MCF 10A (cell line): ENCODE measurements at regions of chr9 and their contacts with region 1.

Region 1: DNA sequence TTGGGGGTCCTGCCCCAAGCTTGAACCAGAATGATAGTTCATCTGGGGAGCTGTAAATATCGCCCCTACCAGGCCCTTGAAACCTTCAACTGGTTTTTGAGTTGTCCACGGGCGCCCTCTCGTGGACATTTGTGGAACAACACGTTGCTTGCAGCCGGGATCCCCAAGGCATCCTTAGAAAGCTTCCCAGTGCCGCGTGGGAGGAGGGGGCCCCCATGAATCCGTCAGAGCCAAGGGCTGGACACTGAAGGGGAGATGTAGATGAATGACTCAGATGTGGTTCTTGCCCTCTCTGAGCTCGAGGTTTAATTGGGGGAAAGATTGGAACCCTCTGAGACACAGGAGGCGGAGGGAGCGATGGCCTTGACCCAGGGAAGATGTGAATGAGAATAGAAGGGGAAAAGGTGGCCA is 31.8 kb upstream of the ORM1 start:
- DNase-seq: peak; percentile 76
- H3K4me3 Mint-ChIP-seq: no peak overlapping the region
- H3K27ac Mint-ChIP-seq: no peak overlapping the region
- H3K4me1 Mint-ChIP-seq: peaks cover 11% of the 10 kb centered on the region
- H3K27me3 Mint-ChIP-seq: no peaks in the 10 kb centered on the region
- CTCF ChIP-seq: peak; percentile 96

Region 2: GRCh38 chr9:114088571-114089170 is 202.4 kb before region 1 on chr9:
- CTCF ChIA-PET with region 1: interaction called, 73 read pairs
- POLR2A ChIA-PET with region 1: no interaction called
- intact Hi-C with region 1: no loop called
- DNase-seq: no peak
- H3K4me3 Mint-ChIP-seq: no peak overlapping the region
- H3K27ac Mint-ChIP-seq: no peak overlapping the region
- H3K4me1 Mint-ChIP-seq: no peaks in the 10 kb centered on the region
- H3K27me3 Mint-ChIP-seq: no peaks in the 10 kb centered on the region
- CTCF ChIP-seq: no peak

Region 3: GRCh38 chr9:114098016-114098935 is 192.8 kb before region 1 on chr9:
- CTCF ChIA-PET with region 1: interaction called, 19 read pairs
- POLR2A ChIA-PET with region 1: no interaction called
- intact Hi-C with region 1: no loop called
- DNase-seq: no peak
- H3K4me3 Mint-ChIP-seq: no peak overlapping the region
- H3K27ac Mint-ChIP-seq: no peak overlapping the region
- H3K4me1 Mint-ChIP-seq: no peaks in the 10 kb centered on the region
- H3K27me3 Mint-ChIP-seq: peaks cover 7% of the 10 kb centered on the region
- CTCF ChIP-seq: no peak

Region 4: DNA sequence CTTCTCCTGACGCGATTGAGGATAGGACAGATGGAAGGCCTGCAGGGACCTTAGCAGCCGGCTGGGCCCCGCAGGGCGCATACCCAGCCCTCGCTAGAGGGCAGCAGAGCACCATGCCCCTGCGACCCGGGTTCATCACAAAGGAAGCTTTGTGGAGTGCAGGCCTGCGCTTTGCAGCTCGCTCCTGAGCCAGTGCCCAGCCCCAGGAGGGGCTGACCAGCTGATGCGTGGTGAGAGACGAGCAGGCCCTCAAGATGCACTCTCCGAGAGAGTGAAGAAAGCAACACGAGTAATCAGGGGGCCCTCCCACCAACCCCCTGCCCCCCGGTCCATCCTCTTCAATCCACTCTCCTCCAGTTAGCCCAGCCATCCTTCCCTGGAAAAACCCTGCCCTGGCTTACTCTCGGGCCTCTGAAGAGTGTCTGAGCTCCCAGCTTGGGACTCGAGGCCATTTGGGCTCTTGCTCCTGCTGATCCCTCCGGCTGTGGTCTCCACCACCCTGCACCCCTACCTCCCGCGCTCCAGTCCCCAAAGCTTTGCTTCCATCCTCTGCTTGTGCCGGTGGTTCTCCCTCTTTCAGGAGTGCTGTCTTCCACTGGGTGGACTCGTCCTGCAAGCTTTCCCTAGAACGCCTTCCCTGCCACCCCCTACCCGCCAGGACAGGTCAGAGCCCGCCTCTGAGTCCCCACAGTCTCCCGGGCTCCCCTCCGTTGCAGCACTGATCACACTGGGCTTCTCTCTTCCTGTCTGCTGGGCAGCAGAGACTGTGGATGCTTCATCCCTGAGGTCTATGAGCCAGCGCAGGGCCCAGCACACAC is 182.8 kb before region 1 on chr9:
- CTCF ChIA-PET with region 1: interaction called, 160 read pairs
- POLR2A ChIA-PET with region 1: interaction called, 3 read pairs
- intact Hi-C with region 1: loop called (anchors 1 kb)
- DNase-seq: peak; percentile 76
- H3K4me3 Mint-ChIP-seq: no peak overlapping the region
- H3K27ac Mint-ChIP-seq: no peak overlapping the region
- H3K4me1 Mint-ChIP-seq: peaks cover 6% of the 10 kb centered on the region
- H3K27me3 Mint-ChIP-seq: peaks cover 78% of the 10 kb centered on the region
- CTCF ChIP-seq: peak; percentile 91

Region 5: GRCh38 chr9:114141553-114142402 is 149.3 kb before region 1 on chr9:
- CTCF ChIA-PET with region 1: interaction called, 15 read pairs
- POLR2A ChIA-PET with region 1: no interaction called
- intact Hi-C with region 1: no loop called
- DNase-seq: no peak
- H3K4me3 Mint-ChIP-seq: no peak overlapping the region
- H3K27ac Mint-ChIP-seq: no peak overlapping the region
- H3K4me1 Mint-ChIP-seq: no peaks in the 10 kb centered on the region
- H3K27me3 Mint-ChIP-seq: peaks cover 49% of the 10 kb centered on the region
- CTCF ChIP-seq: no peak

Region 6: DNA sequence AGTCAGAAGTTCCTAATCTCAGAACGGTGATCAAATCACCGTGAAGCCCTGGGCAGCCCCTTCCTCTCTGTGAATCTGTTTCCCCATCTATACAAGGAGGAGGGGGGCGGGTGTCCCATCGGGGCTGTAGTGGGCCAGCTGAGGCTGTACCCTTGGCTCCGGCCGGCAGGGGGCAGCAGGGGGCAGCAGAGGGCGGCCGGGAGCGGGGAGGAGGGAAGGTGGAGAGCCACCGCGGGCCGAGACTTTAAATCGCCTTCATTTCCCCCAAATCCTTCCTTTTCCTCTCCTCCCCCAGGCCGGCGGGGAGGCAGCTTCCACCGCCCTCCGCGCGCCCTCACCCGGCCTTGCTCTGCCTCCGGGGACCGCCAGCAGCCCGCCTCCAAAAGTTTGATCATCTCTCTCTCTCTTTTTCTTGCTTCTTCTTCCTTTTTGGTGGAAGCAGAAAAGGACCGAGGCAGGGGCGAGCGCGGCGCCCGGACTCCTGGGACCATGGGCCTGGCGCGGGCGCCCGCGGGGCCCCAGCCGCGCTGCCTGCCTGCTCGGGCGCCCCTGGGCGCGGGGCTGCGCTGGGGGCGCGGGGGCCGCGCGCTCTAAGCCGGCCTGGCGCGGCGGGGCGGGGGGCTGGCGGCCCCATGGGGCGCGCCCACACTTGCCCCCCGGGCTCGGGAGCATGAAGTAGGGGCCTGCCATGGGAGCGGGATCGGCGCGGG is 135.7 kb before region 1 on chr9 and contains the start of gene COL27A1:
- CTCF ChIA-PET with region 1: interaction called, 150 read pairs
- POLR2A ChIA-PET with region 1: no interaction called
- intact Hi-C with region 1: loop called (anchors 1 kb)
- DNase-seq: peak; percentile 77
- H3K4me3 Mint-ChIP-seq: peak within 1 kb of the TSS; percentile 70
- H3K27ac Mint-ChIP-seq: no peak within 1 kb of the TSS
- H3K4me1 Mint-ChIP-seq: peaks cover 7% of the 10 kb centered on the region
- H3K27me3 Mint-ChIP-seq: peaks cover 47% of the 10 kb centered on the region
- CTCF ChIP-seq: peak; percentile 93
- total RNA-seq, gene COL27A1: 1.3 and 2.9 TPM in 2 replicates

Region 7: GRCh38 chr9:114163517-114163951 is 127.5 kb before region 1 on chr9:
- CTCF ChIA-PET with region 1: interaction called, 150 read pairs
- POLR2A ChIA-PET with region 1: no interaction called
- intact Hi-C with region 1: no loop called
- DNase-seq: peak; percentile 30
- H3K4me3 Mint-ChIP-seq: no peak overlapping the region
- H3K27ac Mint-ChIP-seq: no peak overlapping the region
- H3K4me1 Mint-ChIP-seq: no peaks in the 10 kb centered on the region
- H3K27me3 Mint-ChIP-seq: no peaks in the 10 kb centered on the region
- CTCF ChIP-seq: no peak

Region 8: GRCh38 chr9:114246558-114246957 is 44.5 kb before region 1 on chr9:
- CTCF ChIA-PET with region 1: no interaction called
- POLR2A ChIA-PET with region 1: no interaction called
- intact Hi-C with region 1: no loop called
- DNase-seq: no peak
- H3K4me3 Mint-ChIP-seq: no peak overlapping the region
- H3K27ac Mint-ChIP-seq: no peak overlapping the region
- H3K4me1 Mint-ChIP-seq: no peaks in the 10 kb centered on the region
- H3K27me3 Mint-ChIP-seq: no peaks in the 10 kb centered on the region
- CTCF ChIP-seq: no peak